ENCODE measurements at regions of chr11 and their contacts with region 1.

Region 1: GRCh38 chr11:10540923-10541560 is at the start of gene RNF141:
- DNase-seq: peak; percentile 99
- ATAC-seq: peak; percentile 91
- H3K4me3 Mint-ChIP-seq: peak within 1 kb of the TSS; percentile 90
- H3K27ac Mint-ChIP-seq: peak within 1 kb of the TSS; percentile 95
- H3K4me1 Mint-ChIP-seq: peaks cover 80% of the 10 kb centered on the region
- H3K27me3 Mint-ChIP-seq: no peaks in the 10 kb centered on the region
- CTCF ChIP-seq: no peak
- total RNA-seq, gene RNF141: 32.8 and 36.9 TPM in 2 replicates

Region 2: DNA sequence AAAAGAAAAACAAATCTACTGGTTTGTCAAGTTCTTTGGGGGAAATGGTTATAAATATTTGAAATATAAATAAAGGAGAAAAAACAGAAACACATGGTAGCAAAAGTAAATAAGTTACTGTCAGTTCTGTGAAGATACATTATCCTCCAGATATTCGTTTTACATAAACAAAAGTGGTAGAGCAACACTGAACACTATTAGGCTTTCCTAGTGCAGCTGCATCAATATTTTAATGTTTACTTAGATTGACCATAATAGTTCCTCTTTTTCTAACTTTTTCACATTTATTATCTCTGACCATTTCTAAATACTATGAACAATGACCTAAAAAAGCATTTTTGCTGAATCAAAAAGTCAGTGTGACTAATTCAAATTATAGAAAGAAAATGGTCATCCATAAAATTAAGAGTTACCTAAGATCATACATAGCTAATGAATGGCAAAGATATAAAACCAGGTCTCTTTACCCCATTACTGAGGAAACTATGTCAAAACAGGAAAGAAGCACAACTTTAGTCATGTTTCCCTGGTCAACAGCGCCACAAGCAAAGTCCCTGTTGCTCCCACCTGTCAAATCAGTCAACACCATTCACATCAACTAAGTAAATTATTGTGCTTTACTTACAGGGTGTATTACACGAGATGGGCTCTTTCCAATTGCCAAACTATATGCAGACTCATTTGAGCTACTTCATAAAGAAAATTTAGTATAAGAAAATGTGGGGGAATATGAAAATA is 285.5 kb before region 1 on chr11:
- CTCF ChIA-PET with region 1: no interaction called
- POLR2A ChIA-PET with region 1: no interaction called
- intact Hi-C with region 1: no loop called
- DNase-seq: no peak
- ATAC-seq: no peak
- H3K4me3 Mint-ChIP-seq: no peak overlapping the region
- H3K27ac Mint-ChIP-seq: no peak overlapping the region
- H3K4me1 Mint-ChIP-seq: peaks cover 13% of the 10 kb centered on the region
- H3K27me3 Mint-ChIP-seq: no peaks in the 10 kb centered on the region
- CTCF ChIP-seq: no peak

Region 3: GRCh38 chr11:10490398-10491241 is 50.4 kb before region 1 on chr11:
- CTCF ChIA-PET with region 1: interaction called, 5 read pairs
- POLR2A ChIA-PET with region 1: interaction called, 16 read pairs
- intact Hi-C with region 1: loop called (anchors 2 kb)
- DNase-seq: no peak
- ATAC-seq: no peak
- H3K4me3 Mint-ChIP-seq: no peak overlapping the region
- H3K27ac Mint-ChIP-seq: peak overlapping the region; percentile 91
- H3K4me1 Mint-ChIP-seq: peaks cover 43% of the 10 kb centered on the region
- H3K27me3 Mint-ChIP-seq: no peaks in the 10 kb centered on the region
- CTCF ChIP-seq: no peak

Region 4: DNA sequence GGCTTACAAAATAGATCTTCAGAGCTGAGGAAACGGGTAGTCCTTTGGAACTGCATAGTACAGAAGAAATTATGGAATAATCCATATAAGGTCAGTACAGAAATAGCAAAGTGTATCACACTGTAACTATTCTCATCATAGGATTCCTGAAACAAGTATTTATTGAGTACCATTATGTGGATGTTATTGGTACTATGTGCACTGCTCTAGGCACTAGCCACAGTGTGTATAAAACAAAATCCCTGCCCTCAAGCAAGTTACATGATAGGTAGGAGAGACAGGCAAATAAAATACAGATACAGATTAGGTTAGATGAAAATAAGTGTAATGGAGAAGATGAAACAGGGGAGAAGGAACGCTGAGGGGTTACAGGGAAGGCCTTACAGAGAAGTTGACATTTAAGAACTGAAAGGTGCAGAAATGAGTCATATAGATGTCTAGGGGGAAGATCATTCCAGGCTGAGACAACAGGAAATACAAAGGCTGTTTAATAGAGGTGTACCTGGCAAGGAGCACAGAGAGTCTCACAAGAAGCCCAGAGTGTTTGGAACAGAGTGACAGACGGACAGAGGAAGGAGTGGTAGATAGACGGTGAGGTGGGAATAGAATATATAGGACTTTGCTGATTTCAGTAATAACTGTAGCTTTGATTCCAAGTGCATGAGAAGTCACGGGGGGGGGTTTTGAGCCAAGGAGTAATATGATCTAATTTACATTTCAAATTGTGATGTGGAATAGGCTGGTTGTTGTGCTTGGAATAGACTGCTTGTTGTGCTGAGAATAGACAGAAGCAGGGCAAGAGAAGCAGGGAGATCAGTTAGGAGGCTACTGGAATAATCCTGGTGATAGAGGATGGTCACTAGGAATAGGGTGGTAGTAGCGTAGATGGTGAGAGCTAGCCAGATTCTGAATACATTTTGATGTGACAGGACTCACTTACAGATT is 13.8 kb before region 1 on chr11:
- CTCF ChIA-PET with region 1: interaction called, 11 read pairs
- POLR2A ChIA-PET with region 1: interaction called, 10 read pairs
- intact Hi-C with region 1: loop called (anchors 1 kb)
- DNase-seq: no peak
- ATAC-seq: peak; percentile 95
- H3K4me3 Mint-ChIP-seq: peak overlapping the region; percentile 21
- H3K27ac Mint-ChIP-seq: peak overlapping the region; percentile 77
- H3K4me1 Mint-ChIP-seq: peaks cover 21% of the 10 kb centered on the region
- H3K27me3 Mint-ChIP-seq: no peaks in the 10 kb centered on the region
- CTCF ChIP-seq: no peak

Region 5: DNA sequence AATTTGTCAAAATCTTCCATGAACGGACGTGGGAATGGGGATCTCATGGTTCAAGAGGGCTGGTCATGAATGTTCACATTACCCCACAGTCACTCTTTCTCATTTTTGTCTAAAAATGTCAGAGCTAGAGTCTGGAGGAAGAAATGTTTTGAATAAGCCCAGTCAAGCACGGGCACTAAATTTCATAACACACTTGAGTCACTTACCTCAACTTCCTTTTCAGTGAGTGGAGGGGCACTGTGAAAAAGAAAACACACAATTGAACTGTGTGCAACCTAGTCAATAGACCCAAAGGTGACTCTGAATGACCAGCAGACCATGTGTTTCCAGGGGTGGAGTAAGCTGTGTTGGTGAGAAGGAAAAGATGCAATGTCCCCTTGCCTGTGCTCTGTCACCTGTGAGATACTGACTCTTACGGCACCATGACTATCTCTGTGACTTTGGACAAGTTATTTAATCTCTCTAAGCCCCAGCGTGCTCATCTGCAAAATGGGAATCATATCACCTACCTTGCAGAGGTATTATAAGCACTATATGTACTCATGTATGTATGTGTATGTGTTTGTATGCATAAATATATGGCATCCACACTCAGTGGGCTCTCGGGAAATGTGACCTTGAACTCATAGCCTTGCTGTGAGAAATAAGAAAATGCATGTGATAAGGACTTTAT is 65.6 kb after region 1 on chr11:
- CTCF ChIA-PET with region 1: interaction called, 9 read pairs
- POLR2A ChIA-PET with region 1: interaction called, 18 read pairs
- intact Hi-C with region 1: loop called (anchors 2 kb)
- DNase-seq: no peak
- ATAC-seq: peak; percentile 84
- H3K4me3 Mint-ChIP-seq: peak overlapping the region; percentile 73
- H3K27ac Mint-ChIP-seq: peak overlapping the region; percentile 90
- H3K4me1 Mint-ChIP-seq: peaks cover 99% of the 10 kb centered on the region
- H3K27me3 Mint-ChIP-seq: no peaks in the 10 kb centered on the region
- CTCF ChIP-seq: no peak

Region 6: DNA sequence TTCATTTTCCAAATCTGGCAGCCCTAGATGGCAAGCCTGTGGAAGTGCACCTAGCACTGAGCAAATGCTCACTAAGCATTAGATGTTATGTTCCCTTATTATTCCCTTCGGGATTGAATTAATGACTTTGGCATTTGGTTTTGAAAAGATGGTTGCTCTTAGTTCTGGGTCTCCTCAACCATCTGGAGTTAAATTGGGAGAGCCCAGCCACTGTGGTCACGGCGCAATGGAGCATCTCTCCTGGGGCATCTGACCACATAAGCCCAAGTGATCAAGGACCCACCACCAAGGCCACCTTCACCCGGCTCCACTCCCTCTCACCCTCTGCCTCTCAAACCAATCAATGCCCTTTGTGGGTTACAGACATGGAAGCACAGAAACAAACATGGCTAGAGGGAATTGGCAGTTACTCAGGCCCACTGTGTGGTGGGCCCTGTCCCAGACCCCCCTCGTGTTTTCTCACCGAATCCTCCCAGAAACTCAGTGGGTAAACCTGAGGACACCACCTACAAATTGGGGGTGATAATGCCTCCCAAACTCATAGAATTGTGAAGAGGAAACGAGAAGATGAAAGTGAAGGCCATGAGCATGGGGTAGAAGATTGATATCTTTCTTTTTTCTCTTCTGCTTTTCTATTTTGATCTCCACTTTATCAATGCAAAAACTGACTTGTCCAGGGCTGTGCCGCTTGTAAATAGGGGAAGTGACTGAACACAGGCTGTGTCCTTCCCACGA is 100.3 kb after region 1 on chr11:
- CTCF ChIA-PET with region 1: interaction called, 11 read pairs
- POLR2A ChIA-PET with region 1: interaction called, 20 read pairs
- intact Hi-C with region 1: loop called (anchors 1 kb)
- DNase-seq: no peak
- ATAC-seq: peak; percentile 84
- H3K4me3 Mint-ChIP-seq: peak overlapping the region; percentile 62
- H3K27ac Mint-ChIP-seq: peak overlapping the region; percentile 96
- H3K4me1 Mint-ChIP-seq: peaks cover 83% of the 10 kb centered on the region
- H3K27me3 Mint-ChIP-seq: no peaks in the 10 kb centered on the region
- CTCF ChIP-seq: no peak

Region 7: DNA sequence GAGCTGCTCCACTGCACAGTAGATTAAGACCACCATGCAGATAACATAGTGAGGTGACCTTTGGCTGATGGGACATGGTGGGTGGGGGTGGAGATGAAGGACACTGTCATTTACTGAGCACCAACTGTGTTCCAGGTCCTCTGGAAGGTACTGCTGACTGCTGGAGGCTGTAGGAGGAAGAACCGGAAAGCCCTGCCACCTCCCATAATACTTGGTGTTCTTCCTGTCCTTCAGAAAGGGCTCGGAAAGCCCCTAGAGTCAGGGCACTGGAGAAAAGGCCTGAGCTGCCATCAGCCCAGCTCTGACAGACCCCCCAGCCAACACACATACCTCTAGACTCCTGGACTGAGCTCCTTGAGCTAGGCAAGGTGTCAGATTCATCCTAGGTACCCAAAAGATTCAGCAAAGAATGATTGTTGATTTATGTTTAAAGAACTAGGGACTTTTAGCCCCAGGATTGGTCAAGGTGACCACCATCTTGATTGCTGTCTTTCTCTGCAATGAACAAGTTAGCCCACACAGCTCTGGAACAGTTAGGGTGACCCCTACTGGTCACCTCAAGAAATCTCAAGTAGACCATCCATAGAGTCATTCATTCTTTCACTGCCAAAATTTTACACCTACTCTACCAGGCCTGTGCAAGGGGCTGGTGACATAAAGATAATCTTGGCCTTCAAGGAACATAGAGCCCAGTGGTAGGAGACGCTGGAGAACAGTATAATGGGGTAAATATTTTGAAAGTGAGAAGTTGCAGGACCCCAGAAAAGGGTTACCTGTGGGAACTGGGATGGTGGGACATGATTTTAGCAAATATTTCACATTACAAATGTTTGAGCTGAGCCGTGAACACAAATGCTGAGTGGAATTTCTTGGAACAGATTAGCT is 113.1 kb after region 1 on chr11:
- CTCF ChIA-PET with region 1: interaction called, 16 read pairs
- POLR2A ChIA-PET with region 1: interaction called, 13 read pairs
- intact Hi-C with region 1: loop called (anchors 1 kb)
- DNase-seq: no peak
- ATAC-seq: peak; percentile 53
- H3K4me3 Mint-ChIP-seq: no peak overlapping the region
- H3K27ac Mint-ChIP-seq: peak overlapping the region; percentile 38
- H3K4me1 Mint-ChIP-seq: peaks cover 87% of the 10 kb centered on the region
- H3K27me3 Mint-ChIP-seq: no peaks in the 10 kb centered on the region
- CTCF ChIP-seq: no peak